Lower leg skin (tissue), 4 donors: ENCODE measurements at regions of chr2 and their contacts with region 1.

Region 1: DNA sequence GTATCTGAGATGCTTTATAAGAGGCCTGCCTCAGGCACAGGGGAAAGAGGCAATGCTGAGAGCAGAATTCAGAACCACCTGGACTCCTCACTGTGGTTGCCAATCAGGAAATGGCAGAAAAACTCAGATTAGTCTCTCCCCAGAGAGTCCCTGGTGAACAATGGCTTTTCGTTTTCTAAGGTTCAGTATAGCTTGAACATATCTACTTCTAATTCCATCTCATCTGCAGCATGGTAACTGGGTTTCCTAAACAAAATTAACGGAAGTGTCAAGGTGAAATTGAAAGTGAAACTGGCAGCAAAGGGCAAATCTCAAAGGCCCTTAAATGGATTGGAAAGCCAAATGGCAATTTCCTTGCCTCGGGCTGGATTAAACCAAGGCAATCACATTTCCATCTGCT is 480.2 kb upstream of the ACVR2A start:
- DNase-seq: no peak
- H3K4me3 ChIP-seq: no peak overlapping the region
- CTCF ChIP-seq: no peak
- POLR2A ChIP-seq: no peak

Region 2: GRCh38 chr2:148013876-148014275 is 649.3 kb after region 1 on chr2:
- intact Hi-C with region 1: loop called (anchors 10 kb)
- DNase-seq: no peak
- H3K4me3 ChIP-seq: no peak overlapping the region
- CTCF ChIP-seq: no peak
- POLR2A ChIP-seq: no peak

Region 3: GRCh38 chr2:148071351-148071750 is 706.8 kb after region 1 on chr2:
- intact Hi-C with region 1: loop called (anchors 5 kb)
- DNase-seq: no peak
- H3K4me3 ChIP-seq: no peak overlapping the region
- CTCF ChIP-seq: no peak
- POLR2A ChIP-seq: no peak